Right cardiac atrium (tissue), 5 donors: ENCODE measurements at regions of chr21 and their contacts with region 1.

Region 1: DNA sequence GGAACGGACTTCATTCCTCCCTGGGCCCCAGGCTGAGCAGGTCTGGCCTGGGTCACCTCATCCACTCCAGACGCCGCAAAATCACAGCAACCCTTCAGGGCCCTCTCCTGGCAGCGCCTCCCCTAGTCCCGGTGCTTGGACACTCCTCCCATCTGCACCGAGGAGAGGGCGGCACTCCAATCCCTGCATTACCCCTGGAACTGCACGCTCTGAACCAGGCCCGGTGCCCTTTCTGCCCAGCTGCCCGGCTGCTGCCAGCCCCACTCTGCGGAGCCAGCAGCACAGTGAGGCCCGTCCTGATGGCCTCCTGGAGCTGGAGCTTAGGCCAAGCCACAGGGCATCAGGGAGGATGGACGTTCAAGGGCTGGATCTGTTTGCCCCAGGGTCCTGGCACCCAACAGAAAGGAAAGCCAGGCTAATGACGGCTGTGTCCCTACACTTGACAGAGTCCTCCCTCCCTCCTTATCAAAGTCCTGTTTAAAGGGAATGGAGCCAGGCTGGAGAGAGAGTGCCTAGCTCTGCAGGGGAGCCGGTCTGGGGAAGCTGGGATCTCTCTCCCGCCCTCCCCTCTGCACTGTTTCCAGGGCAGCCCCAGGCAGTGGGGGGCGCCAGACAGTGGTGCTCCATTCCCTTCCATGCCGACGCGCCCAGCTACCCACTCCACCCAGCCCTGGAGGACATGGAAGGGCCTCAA is 12.7 kb downstream of the COL6A2 start:
- DNase-seq: peak; percentile 48 to 87 (median 79)
- ATAC-seq: peak; percentile 74 to 93
- H3K4me3 ChIP-seq: no peak overlapping the region
- H3K27ac ChIP-seq: peak overlapping the region; percentile 75
- H3K4me1 ChIP-seq: no peaks in the 10 kb centered on the region
- H3K27me3 ChIP-seq: no peaks in the 10 kb centered on the region

Region 2: GRCh38 chr21:46000731-46001641 is 109.7 kb before region 1 on chr21:
- intact Hi-C with region 1: loop called in 1 of 4 experiments (anchors 10 kb)
- DNase-seq: peak; percentile 22 to 71 (median 63)
- ATAC-seq: peak in 1 of 2 donors; percentile 3
- H3K4me3 ChIP-seq: no peak overlapping the region
- H3K27ac ChIP-seq: no peak overlapping the region
- H3K4me1 ChIP-seq: no peaks in the 10 kb centered on the region
- H3K27me3 ChIP-seq: no peaks in the 10 kb centered on the region